Activated CD4-positive, alpha-beta T cell treated with anti-CD3 and anti-CD28 coated beads for 36 hours (primary cell): ENCODE measurements at regions of chr2 and their contacts with region 1.

Region 1: GRCh38 chr2:201257956-201258665 is 2.2 kb upstream of the CASP8 start:
- DNase-seq: peak; percentile 96
- ATAC-seq: peak; percentile 66
- H3K4me3 Mint-ChIP-seq: peak overlapping the region; percentile 79
- H3K27ac Mint-ChIP-seq: peak overlapping the region; percentile 98
- H3K4me1 Mint-ChIP-seq: peaks cover 76% of the 10 kb centered on the region
- H3K27me3 Mint-ChIP-seq: no peaks in the 10 kb centered on the region

Region 2: DNA sequence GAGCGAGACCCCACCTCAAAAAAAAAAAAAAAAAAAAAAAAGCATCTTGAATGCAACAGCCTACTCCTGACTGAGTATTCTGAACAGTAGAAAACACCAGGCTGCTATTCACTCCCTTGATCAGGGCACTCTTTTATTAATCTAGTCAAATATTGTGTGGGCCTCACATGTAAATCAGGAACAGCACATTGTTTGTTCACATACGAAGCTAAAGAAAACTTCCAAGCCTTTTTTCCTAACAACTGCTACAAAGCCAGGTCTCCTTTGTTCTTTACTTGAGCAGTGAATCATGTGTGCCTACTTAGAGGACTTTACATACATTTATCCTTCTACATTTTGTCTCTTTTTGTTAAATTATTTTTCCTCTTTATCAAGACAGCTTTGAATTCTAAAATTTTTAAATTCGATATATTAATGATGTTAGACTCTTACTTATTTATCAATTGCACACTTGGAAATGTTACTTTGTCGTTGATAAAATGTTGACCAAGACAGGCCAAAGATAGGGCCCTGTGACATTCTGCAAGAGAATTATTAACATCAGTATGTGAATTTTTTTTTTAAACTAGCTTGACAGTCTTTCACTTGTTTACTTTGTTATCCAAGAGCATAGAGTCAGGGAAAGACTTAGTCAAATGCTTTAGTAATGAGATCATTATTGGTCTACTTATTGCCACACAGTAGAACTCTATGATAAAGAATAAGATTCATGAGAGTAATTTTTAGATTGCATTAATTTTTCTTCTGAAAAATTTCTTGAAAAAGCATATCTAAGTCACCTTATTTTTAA is 938.4 kb before region 1 on chr2:
- CTCF ChIA-PET with region 1: no interaction called
- POLR2A ChIA-PET with region 1: no interaction called
- intact Hi-C with region 1: no loop called
- DNase-seq: no peak
- ATAC-seq: no peak
- H3K4me3 Mint-ChIP-seq: no peak overlapping the region
- H3K27ac Mint-ChIP-seq: no peak overlapping the region
- H3K4me1 Mint-ChIP-seq: peaks cover 16% of the 10 kb centered on the region
- H3K27me3 Mint-ChIP-seq: no peaks in the 10 kb centered on the region

Region 3: GRCh38 chr2:200713003-200713703 is 545.0 kb before region 1 on chr2:
- CTCF ChIA-PET with region 1: interaction called, 4 read pairs
- POLR2A ChIA-PET with region 1: no interaction called
- intact Hi-C with region 1: loop called in 1 of 2 experiments (anchors 2 kb)
- DNase-seq: peak; percentile 98
- ATAC-seq: peak; percentile 93
- H3K4me3 Mint-ChIP-seq: peak overlapping the region; percentile 70
- H3K27ac Mint-ChIP-seq: peak overlapping the region; percentile 100
- H3K4me1 Mint-ChIP-seq: peaks cover 47% of the 10 kb centered on the region
- H3K27me3 Mint-ChIP-seq: no peaks in the 10 kb centered on the region

Region 4: GRCh38 chr2:201118121-201118960 is 139.8 kb before region 1 on chr2:
- CTCF ChIA-PET with region 1: interaction called, 3 read pairs
- POLR2A ChIA-PET with region 1: interaction called, 5 read pairs
- intact Hi-C with region 1: loop called in 1 of 2 experiments (anchors 2 kb)
- DNase-seq: peak; percentile 94
- ATAC-seq: peak; percentile 37
- H3K4me3 Mint-ChIP-seq: peak overlapping the region; percentile 98
- H3K27ac Mint-ChIP-seq: peak overlapping the region; percentile 100
- H3K4me1 Mint-ChIP-seq: peaks cover 42% of the 10 kb centered on the region
- H3K27me3 Mint-ChIP-seq: no peaks in the 10 kb centered on the region

Region 5: GRCh38 chr2:201270293-201271001 is 12.3 kb after region 1 on chr2:
- CTCF ChIA-PET with region 1: interaction called, 3 read pairs
- POLR2A ChIA-PET with region 1: interaction called, 6 read pairs
- intact Hi-C with region 1: loop called in 1 of 2 experiments (anchors 1 kb)
- DNase-seq: no peak
- ATAC-seq: no peak
- H3K4me3 Mint-ChIP-seq: no peak overlapping the region
- H3K27ac Mint-ChIP-seq: peak overlapping the region; percentile 38
- H3K4me1 Mint-ChIP-seq: peaks cover 78% of the 10 kb centered on the region
- H3K27me3 Mint-ChIP-seq: no peaks in the 10 kb centered on the region

Region 6: GRCh38 chr2:201320701-201321100 is 62.6 kb after region 1 on chr2:
- CTCF ChIA-PET with region 1: no interaction called
- POLR2A ChIA-PET with region 1: no interaction called
- intact Hi-C with region 1: no loop called
- DNase-seq: no peak
- ATAC-seq: no peak
- H3K4me3 Mint-ChIP-seq: no peak overlapping the region
- H3K27ac Mint-ChIP-seq: no peak overlapping the region
- H3K4me1 Mint-ChIP-seq: no peaks in the 10 kb centered on the region
- H3K27me3 Mint-ChIP-seq: no peaks in the 10 kb centered on the region

Region 7: DNA sequence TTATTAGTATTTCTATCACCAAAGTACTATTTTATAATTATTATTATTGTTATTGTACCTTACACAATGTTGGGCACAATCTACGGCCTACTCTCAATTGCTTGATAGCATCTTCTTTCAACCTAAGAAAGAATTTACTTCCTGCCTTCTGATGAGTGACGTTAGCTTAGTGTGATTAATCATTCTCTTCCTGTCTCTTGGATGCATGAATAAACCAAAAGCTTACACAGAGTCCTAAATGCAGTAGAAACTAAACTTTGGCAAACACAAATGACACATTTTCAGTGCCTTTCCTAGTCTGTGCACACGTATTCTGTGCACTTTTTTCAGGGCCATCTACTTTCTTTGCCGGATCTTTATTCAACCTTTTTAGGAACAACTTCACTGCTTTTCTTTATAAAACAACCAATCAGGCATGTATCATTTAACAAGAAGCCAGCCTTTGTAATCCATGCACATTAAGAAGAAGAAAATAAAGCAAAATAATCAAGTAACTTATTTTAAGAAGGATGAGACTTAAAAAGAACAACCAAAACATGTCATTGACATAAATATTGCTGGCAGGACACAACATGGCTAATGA is 174.0 kb after region 1 on chr2:
- CTCF ChIA-PET with region 1: no interaction called
- POLR2A ChIA-PET with region 1: no interaction called
- intact Hi-C with region 1: loop called in 1 of 2 experiments (anchors 5 kb)
- DNase-seq: no peak
- ATAC-seq: peak; percentile 99
- H3K4me3 Mint-ChIP-seq: peak overlapping the region; percentile 45
- H3K27ac Mint-ChIP-seq: peak overlapping the region; percentile 95
- H3K4me1 Mint-ChIP-seq: peaks cover 49% of the 10 kb centered on the region
- H3K27me3 Mint-ChIP-seq: no peaks in the 10 kb centered on the region

Region 8: GRCh38 chr2:201642579-201643215 is 384.6 kb after region 1 on chr2:
- CTCF ChIA-PET with region 1: no interaction called
- POLR2A ChIA-PET with region 1: no interaction called
- intact Hi-C with region 1: loop called (anchors 5 kb)
- DNase-seq: peak; percentile 91
- ATAC-seq: peak; percentile 82
- H3K4me3 Mint-ChIP-seq: peak overlapping the region; percentile 79
- H3K27ac Mint-ChIP-seq: peak overlapping the region; percentile 84
- H3K4me1 Mint-ChIP-seq: peaks cover 9% of the 10 kb centered on the region
- H3K27me3 Mint-ChIP-seq: no peaks in the 10 kb centered on the region